H1 (cell line): ENCODE measurements at regions of chr1 and their contacts with region 1.

Region 1: DNA sequence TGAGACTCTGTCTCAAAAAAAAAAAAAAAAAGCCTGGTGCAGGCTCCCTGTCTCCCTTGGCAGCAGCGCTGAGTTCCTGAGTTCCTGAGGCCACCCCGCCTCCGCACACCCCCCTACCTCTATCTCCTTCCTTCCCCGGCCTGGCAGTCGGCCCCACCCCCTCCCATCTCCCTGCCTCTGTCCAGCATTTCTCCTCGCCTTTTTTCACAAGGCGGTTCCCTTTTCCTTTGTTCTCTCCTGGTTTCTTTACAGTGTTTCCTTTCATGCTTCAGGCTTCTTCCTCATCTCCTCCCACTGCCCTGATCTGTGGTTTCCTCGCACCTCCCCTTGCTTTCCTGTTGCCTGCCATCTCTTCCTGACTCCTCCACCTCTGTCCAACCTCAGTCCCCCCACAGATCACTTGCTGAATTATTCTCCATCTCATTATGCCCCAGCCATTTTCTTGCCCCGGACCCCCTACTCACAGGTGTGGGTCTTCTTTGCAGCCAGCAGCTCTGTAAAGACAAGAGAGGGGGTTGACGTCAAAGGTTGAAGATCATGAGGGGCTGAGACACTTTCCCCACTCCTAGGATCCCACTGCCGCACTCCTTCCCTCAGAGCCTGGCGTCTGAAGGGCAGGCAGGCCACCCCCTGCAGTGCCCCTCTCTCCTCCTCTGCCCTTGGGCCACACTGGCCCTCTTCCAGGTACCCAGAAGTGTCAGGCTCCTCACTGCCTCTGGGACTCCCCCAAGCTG is 2.5 kb downstream of the RORC start:
- DNase-seq: no peak
- H3K4me3 ChIP-seq: peak overlapping the region in 3 of 4 experiments; percentile 11 to 33 (median 14); a peak in 5 of 8 replicates
- H3K27ac ChIP-seq: no peak overlapping the region
- H3K4me1 ChIP-seq: peaks cover 14 to 40% (median 29%) of the 10 kb centered on the region in 4 experiments
- H3K27me3 ChIP-seq: no peaks in the 10 kb centered on the region; a peak in 1 of 7 replicates
- CTCF ChIP-seq: no peak
- EP300 ChIP-seq: no peak
- POLR2A ChIP-seq: no peak
- RAD21 ChIP-seq: no peak

Region 2: DNA sequence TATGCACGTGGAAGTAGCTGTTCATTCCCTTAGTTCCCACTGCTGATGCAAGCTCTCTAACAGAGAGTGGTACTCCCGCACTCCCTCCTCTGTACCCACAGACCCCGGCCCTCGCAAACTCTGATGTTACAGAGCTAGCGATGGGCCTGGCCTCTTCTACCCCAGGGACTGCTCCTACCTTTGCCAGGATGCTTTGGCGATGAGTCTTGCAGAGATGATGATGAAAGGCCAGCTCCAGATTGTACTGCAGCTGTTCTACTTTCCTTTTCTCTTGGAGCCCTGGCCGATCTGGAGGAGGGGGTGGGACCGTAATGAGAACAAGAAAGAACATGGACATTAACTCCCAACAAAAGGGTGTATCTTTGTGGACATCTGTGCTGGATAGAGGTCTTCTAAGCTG is 18.0 kb before region 1 on chr1:
- CTCF ChIA-PET with region 1: interaction called, 10 read pairs
- POLR2A ChIA-PET with region 1: interaction called, 5 read pairs
- DNase-seq: no peak
- H3K4me3 ChIP-seq: no peak overlapping the region
- H3K27ac ChIP-seq: no peak overlapping the region
- H3K4me1 ChIP-seq: peaks cover 1 to 5% (median 4%) of the 10 kb centered on the region in 4 experiments; a peak in 3 of 7 replicates
- H3K27me3 ChIP-seq: no peaks in the 10 kb centered on the region
- CTCF ChIP-seq: no peak
- EP300 ChIP-seq: no peak
- POLR2A ChIP-seq: no peak
- RAD21 ChIP-seq: no peak

Region 3: DNA sequence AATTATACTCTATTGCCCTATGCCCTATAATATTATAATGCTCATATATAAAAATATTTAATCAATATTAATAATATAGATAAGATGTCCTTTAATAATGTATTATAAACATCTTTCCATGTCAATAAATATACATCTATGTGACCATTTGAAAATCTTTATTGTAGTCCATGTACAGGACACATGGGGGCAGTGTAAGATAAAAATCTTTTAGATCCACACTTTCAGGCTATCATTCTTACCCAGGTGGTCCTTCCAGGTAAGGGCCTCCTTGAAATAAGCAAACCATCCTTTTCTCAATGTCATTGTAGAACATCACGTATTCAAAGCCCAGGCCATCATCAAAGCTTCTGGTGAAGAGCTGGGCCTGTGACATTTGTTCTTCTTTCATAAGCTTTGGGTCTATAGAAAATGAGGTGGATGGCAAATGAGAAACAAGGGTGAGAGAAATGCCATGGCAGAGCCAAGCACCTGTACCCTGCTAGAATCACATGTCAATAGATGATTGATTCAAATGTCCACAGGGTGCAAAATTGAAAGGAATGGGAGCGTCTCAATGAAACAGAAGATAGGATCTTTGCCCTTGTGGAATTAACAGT is 59.9 kb after region 1 on chr1:
- CTCF ChIA-PET with region 1: no interaction called
- POLR2A ChIA-PET with region 1: no interaction called
- DNase-seq: no peak
- H3K4me3 ChIP-seq: no peak overlapping the region
- H3K27ac ChIP-seq: no peak overlapping the region
- H3K4me1 ChIP-seq: no peaks in the 10 kb centered on the region
- H3K27me3 ChIP-seq: no peaks in the 10 kb centered on the region
- CTCF ChIP-seq: peak in 1 of 3 experiments; percentile 17; a peak in 1 of 4 replicates
- EP300 ChIP-seq: no peak
- POLR2A ChIP-seq: no peak
- RAD21 ChIP-seq: peak; percentile 54